ENCODE measurements at regions of chr3 and their contacts with region 1.

Region 1: GRCh38 chr3:14431892-14432834 is 29.8 kb downstream of the SLC6A6 start:
- DNase-seq: peak; percentile 92 to 94
- ATAC-seq: peak; percentile 38 to 42
- H3K4me3 ChIP-seq: peak overlapping the region in 1 of 4 donors; percentile 22
- H3K27ac ChIP-seq: peak overlapping the region; percentile 74 to 89 (median 87)
- H3K4me1 ChIP-seq: peaks cover 86 to 94% of the 10 kb centered on the region in 2 donors
- H3K27me3 ChIP-seq: no peaks in the 10 kb centered on the region
- CTCF ChIP-seq: no peak
- POLR2A ChIP-seq: peak; percentile 52 to 54

Region 2: GRCh38 chr3:14319654-14320182 is 112.4 kb before region 1 on chr3:
- in situ Hi-C with region 1: no loop called
- intact Hi-C with region 1: loop called (anchors 2 kb)
- DNase-seq: peak in 1 of 2 donors; percentile 58
- ATAC-seq: peak in 1 of 2 donors; percentile 16
- H3K4me3 ChIP-seq: no peak overlapping the region
- H3K27ac ChIP-seq: peak overlapping the region; percentile 78 to 95 (median 88)
- H3K4me1 ChIP-seq: peaks cover 30 to 35% of the 10 kb centered on the region in 2 donors
- H3K27me3 ChIP-seq: no peaks in the 10 kb centered on the region
- CTCF ChIP-seq: no peak
- POLR2A ChIP-seq: no peak

Region 3: GRCh38 chr3:14329116-14329830 is 102.9 kb before region 1 on chr3:
- in situ Hi-C with region 1: no loop called
- intact Hi-C with region 1: loop called (anchors 1 kb)
- DNase-seq: no peak
- ATAC-seq: peak in 1 of 2 donors; percentile 46
- H3K4me3 ChIP-seq: no peak overlapping the region
- H3K27ac ChIP-seq: peak overlapping the region; percentile 44 to 95 (median 79)
- H3K4me1 ChIP-seq: peaks cover 19 to 36% of the 10 kb centered on the region in 2 donors
- H3K27me3 ChIP-seq: no peaks in the 10 kb centered on the region
- CTCF ChIP-seq: no peak
- POLR2A ChIP-seq: no peak

Region 4: GRCh38 chr3:14371573-14372474 is 60.3 kb before region 1 on chr3:
- in situ Hi-C with region 1: no loop called
- intact Hi-C with region 1: loop called (anchors 5 kb)
- DNase-seq: peak; percentile 91 to 96
- ATAC-seq: peak; percentile 71 to 75
- H3K4me3 ChIP-seq: no peak overlapping the region
- H3K27ac ChIP-seq: peak overlapping the region; percentile 84 to 91 (median 85)
- H3K4me1 ChIP-seq: peaks cover 56 to 64% of the 10 kb centered on the region in 2 donors
- H3K27me3 ChIP-seq: no peaks in the 10 kb centered on the region
- CTCF ChIP-seq: peak in 1 of 5 experiments; percentile 23
- POLR2A ChIP-seq: peak; percentile 67 to 73

Region 5: DNA sequence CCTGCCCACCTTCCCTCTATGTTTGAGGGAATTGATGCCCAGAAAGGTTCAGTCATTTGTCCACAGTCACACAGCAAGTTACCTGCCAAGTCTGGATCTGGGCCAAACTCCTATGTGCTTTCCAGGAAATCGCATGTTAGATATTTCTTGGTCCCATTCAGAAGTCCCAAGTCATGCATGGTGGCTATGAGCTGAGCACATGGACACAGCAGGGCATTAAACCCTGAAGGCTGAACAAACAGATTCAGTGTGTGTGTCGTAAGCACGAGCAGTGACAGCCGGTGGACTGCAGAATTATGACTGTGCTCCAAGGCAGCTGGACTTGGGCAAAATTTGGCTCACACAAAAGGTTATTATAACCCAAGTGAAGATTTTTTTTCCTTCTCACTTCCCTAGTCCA is 41.1 kb before region 1 on chr3:
- in situ Hi-C with region 1: no loop called
- intact Hi-C with region 1: no loop called
- DNase-seq: peak; percentile 88 to 94
- ATAC-seq: peak; percentile 86 to 87
- H3K4me3 ChIP-seq: no peak overlapping the region
- H3K27ac ChIP-seq: peak overlapping the region; percentile 90 to 99 (median 94)
- H3K4me1 ChIP-seq: peaks cover 31 to 34% of the 10 kb centered on the region in 2 donors
- H3K27me3 ChIP-seq: no peaks in the 10 kb centered on the region
- CTCF ChIP-seq: no peak
- POLR2A ChIP-seq: peak in 1 of 2 donors; percentile 21

Region 6: DNA sequence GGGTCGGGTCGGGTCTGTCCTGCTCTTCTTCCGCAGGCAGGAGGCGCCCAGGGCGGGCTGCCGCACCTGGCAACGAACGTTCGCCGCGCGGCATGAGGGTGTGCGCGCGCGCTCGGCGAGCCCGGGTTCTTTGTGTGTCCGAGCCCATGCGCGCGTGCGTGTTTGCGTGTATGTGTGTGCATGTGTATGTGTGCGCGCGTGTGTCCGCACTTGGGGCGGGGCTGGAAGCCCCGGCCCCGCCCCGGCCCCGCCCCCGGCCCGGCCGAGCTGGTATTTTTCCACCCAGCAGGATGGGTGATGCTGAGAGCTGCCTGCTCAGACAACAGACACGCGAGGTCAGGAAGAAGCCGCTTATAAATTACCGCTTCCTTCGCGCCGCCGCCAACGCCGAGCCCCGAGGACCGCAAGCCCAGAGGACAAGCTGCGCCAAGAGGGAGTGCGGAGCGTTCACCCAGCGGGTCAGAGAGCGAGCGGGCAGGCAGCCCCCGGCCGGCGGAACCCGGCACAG is 29.8 kb before region 1 on chr3 and contains the start of gene SLC6A6:
- in situ Hi-C with region 1: no loop called
- intact Hi-C with region 1: loop called (anchors 1 kb)
- DNase-seq: peak; percentile 93 to 97
- ATAC-seq: peak; percentile 75 to 80
- H3K4me3 ChIP-seq: peak within 1 kb of the TSS; percentile 62 to 94 (median 82)
- H3K27ac ChIP-seq: peak within 1 kb of the TSS; percentile 96 to 97 (median 96)
- H3K4me1 ChIP-seq: peaks cover 39 to 40% of the 10 kb centered on the region in 2 donors
- H3K27me3 ChIP-seq: no peaks in the 10 kb centered on the region
- CTCF ChIP-seq: peak; percentile 55 to 68 (median 59)
- POLR2A ChIP-seq: peak; percentile 84 to 94
- total RNA-seq, gene SLC6A6: 42.1 to 119 (median 88.7) TPM

Region 7: DNA sequence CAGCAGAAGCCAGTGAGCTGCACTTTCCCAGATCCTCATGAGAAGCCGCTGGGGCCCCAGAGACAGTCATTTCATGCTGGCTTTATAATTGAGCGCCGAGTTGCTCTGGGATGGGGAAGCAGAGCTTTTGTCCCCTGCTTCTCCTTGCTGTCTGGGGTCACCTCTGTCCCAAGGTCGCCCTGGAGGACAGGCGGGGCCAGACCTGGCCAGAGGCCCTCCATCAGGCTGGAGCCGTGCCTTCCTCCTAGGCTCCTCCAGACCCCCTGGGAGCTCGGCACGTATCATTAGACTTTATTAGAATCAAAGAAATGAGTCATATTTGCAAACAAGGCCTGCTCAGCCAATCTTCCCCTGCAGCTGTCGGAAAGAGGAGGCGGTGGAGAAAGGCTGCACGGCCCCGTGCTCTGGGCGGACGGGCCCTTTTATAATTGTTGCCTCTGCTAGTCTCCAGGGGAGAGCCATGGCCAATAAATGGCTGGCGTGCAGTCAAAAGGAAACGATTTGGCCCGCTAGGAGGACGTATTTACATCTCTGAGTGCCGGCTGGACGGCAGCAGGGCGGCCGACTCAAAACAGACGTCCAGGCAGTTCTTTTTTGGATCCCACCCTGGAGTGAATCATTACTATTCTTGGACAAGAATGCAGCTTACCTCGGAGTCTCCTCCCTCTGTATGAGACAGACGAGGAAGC is 20.7 kb after region 1 on chr3:
- in situ Hi-C with region 1: no loop called
- intact Hi-C with region 1: loop called (anchors 2 kb)
- DNase-seq: peak; percentile 77 to 92
- ATAC-seq: peak; percentile 67 to 71
- H3K4me3 ChIP-seq: peak overlapping the region in 1 of 4 donors; percentile 19
- H3K27ac ChIP-seq: peak overlapping the region; percentile 83 to 93 (median 88)
- H3K4me1 ChIP-seq: peaks cover 45% of the 10 kb centered on the region in 2 donors
- H3K27me3 ChIP-seq: no peaks in the 10 kb centered on the region
- CTCF ChIP-seq: peak in 2 of 5 experiments; percentile 7 to 24
- POLR2A ChIP-seq: peak; percentile 15 to 24

Region 8: DNA sequence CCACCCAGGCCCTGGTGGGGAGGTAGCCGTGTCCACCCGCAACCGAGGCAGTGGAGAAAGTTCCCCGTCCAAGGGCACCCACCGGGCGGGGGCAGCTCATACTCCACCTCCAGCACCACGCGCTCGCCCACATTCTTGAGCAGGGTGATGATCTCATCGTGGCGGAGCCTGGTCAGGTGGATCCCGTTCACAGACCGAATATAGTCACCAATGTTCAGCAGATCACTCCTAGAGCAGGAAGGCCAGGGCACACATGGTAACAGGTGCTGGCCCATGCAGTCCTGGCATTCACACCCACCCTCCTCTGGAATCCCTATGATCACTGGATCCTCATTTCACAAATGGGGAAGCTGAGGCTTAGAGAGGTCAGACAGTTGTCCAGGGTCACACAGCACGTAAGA is 92.1 kb after region 1 on chr3:
- in situ Hi-C with region 1: no loop called
- intact Hi-C with region 1: loop called (anchors 5 kb)
- DNase-seq: peak; percentile 90 to 96
- ATAC-seq: peak; percentile 68 to 76
- H3K4me3 ChIP-seq: no peak overlapping the region
- H3K27ac ChIP-seq: peak overlapping the region; percentile 92 to 99 (median 97)
- H3K4me1 ChIP-seq: peaks cover 62 to 69% of the 10 kb centered on the region in 2 donors
- H3K27me3 ChIP-seq: no peaks in the 10 kb centered on the region
- CTCF ChIP-seq: no peak
- POLR2A ChIP-seq: peak; percentile 68 to 85